ENCODE measurements at regions of chr10 and their contacts with region 1.

Region 1: DNA sequence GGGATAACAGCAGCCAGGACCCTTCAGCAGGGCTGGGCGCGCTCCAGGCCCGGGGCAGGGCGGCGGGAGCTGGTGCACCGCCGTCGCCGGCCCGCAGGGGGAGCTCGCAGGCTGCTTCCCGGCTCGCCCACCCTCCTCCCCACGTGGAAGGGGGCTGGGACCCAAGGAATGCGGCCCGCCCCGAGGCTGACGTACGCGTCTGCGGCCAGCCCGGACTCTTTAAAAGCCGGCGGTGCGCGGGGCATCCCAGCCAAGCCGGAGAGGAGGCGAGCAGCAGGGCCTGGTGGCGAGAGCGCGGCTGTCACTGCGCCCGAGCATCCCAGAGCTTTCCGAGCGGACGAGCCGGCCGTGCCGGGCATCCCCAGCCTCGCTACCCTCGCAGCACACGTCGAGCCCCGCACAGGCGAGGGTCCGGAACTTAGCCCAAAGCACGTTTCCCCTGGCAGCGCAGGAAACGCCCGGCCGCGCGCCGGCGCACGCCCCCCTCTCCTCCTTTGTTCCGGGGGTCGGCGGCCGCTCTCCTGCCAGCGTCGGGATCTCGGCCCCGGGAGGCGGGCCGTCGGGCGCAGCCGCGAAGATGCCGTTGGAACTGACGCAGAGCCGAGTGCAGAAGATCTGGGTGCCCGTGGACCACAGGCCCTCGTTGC is at the start of gene PFKFB3:
- DNase-seq: peak; percentile 79 to 95 (median 91)
- ATAC-seq: peak; percentile 54
- H3K4me3 ChIP-seq: peak within 1 kb of the TSS; percentile 67
- H3K4me3 Mint-ChIP-seq: peak within 1 kb of the TSS; percentile 99
- H3K27ac ChIP-seq: peak within 1 kb of the TSS; percentile 22 to 56
- H3K27ac Mint-ChIP-seq: peak within 1 kb of the TSS; percentile 94
- H3K4me1 ChIP-seq: peaks cover 39% of the 10 kb centered on the region
- H3K4me1 Mint-ChIP-seq: peaks cover 42% of the 10 kb centered on the region
- H3K27me3 ChIP-seq: no peaks in the 10 kb centered on the region
- H3K27me3 Mint-ChIP-seq: no peaks in the 10 kb centered on the region
- CTCF ChIP-seq: peak; percentile 94
- total RNA-seq, gene PFKFB3: 142 to 145 TPM

Region 2: GRCh38 chr10:6144406-6145165 is 58.2 kb before region 1 on chr10:
- CTCF ChIA-PET with region 1: interaction called, 9 read pairs
- POLR2A ChIA-PET with region 1: interaction called, 23 read pairs
- intact Hi-C with region 1: loop called in 1 of 2 experiments (anchors 2 kb)
- DNase-seq: peak; percentile 71 to 94 (median 85)
- ATAC-seq: peak; percentile 90
- H3K4me3 ChIP-seq: peak overlapping the region; percentile 75
- H3K4me3 Mint-ChIP-seq: peak overlapping the region; percentile 89
- H3K27ac ChIP-seq: peak overlapping the region; percentile 70 to 77
- H3K27ac Mint-ChIP-seq: peak overlapping the region; percentile 90
- H3K4me1 ChIP-seq: peaks cover 89% of the 10 kb centered on the region
- H3K4me1 Mint-ChIP-seq: peaks cover 66% of the 10 kb centered on the region
- H3K27me3 ChIP-seq: no peaks in the 10 kb centered on the region
- H3K27me3 Mint-ChIP-seq: no peaks in the 10 kb centered on the region
- CTCF ChIP-seq: no peak

Region 3: DNA sequence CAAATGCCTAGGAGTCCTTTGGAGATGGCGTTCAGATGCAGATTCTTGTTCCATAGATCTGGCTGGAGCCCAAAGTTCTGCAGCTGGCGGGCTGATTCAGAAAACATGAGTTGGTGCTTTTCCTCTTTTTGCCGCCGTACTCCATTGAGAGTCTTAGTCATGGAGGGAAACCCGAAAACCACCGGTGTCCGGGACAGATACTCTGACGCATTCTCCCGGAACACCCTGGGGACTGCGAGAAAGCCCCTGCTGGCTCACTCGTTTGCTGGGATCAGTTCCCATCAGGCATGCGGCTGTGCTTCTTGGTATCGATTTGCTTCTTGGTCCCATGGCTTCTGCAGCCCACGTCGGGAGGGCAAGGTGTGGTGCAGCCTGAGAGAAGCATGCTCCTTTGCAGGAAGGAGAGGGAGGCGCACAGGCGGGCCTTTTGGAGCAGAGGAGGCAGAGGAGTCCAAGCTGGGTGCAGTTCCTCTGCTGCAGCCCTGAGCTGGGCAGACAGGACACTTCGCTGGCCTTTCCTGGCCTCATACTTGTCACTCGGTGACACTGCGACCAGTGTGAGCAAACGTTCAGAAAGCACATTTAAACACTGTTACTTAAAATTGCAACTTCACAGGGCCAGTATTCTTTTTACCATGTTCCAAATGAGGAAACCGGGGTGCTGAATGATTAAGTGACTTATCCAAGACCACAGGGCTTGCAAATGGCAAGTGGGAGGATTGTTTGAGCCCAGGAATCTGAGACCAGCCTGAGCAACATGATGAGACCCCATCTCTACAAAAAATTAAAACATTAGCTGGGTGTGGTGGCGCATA is 30.7 kb before region 1 on chr10:
- CTCF ChIA-PET with region 1: interaction called, 17 read pairs
- POLR2A ChIA-PET with region 1: interaction called, 64 read pairs
- intact Hi-C with region 1: loop called (anchors 1 to 2 kb)
- DNase-seq: peak in 4 of 14 experiments; percentile 15 to 76 (median 57)
- ATAC-seq: no peak
- H3K4me3 ChIP-seq: no peak overlapping the region
- H3K4me3 Mint-ChIP-seq: peak overlapping the region; percentile 18
- H3K27ac ChIP-seq: no peak overlapping the region
- H3K27ac Mint-ChIP-seq: peak overlapping the region; percentile 83
- H3K4me1 ChIP-seq: peaks cover 84% of the 10 kb centered on the region
- H3K4me1 Mint-ChIP-seq: peaks cover 85% of the 10 kb centered on the region
- H3K27me3 ChIP-seq: no peaks in the 10 kb centered on the region
- H3K27me3 Mint-ChIP-seq: no peaks in the 10 kb centered on the region
- CTCF ChIP-seq: no peak

Region 4: GRCh38 chr10:6300106-6300783 is 97.4 kb after region 1 on chr10:
- CTCF ChIA-PET with region 1: interaction called, 19 read pairs
- POLR2A ChIA-PET with region 1: interaction called, 3 read pairs
- intact Hi-C with region 1: loop called in 1 of 2 experiments (anchors 2 kb)
- DNase-seq: peak in 13 of 14 experiments; percentile 7 to 77 (median 36)
- ATAC-seq: peak; percentile 83
- H3K4me3 ChIP-seq: no peak overlapping the region
- H3K4me3 Mint-ChIP-seq: peak overlapping the region; percentile 28
- H3K27ac ChIP-seq: peak overlapping the region; percentile 17 to 27
- H3K27ac Mint-ChIP-seq: peak overlapping the region; percentile 75
- H3K4me1 ChIP-seq: peaks cover 23% of the 10 kb centered on the region
- H3K4me1 Mint-ChIP-seq: peaks cover 33% of the 10 kb centered on the region
- H3K27me3 ChIP-seq: no peaks in the 10 kb centered on the region
- H3K27me3 Mint-ChIP-seq: no peaks in the 10 kb centered on the region
- CTCF ChIP-seq: no peak

Region 5: GRCh38 chr10:6409971-6410651 is 207.3 kb after region 1 on chr10:
- CTCF ChIA-PET with region 1: interaction called, 20 read pairs
- POLR2A ChIA-PET with region 1: interaction called, 29 read pairs
- intact Hi-C with region 1: loop called in 1 of 2 experiments (anchors 1 kb)
- DNase-seq: peak in 13 of 14 experiments; percentile 19 to 86 (median 39)
- ATAC-seq: peak; percentile 95
- H3K4me3 ChIP-seq: peak overlapping the region; percentile 34
- H3K4me3 Mint-ChIP-seq: peak overlapping the region; percentile 78
- H3K27ac ChIP-seq: peak overlapping the region; percentile 51 to 78
- H3K27ac Mint-ChIP-seq: peak overlapping the region; percentile 94
- H3K4me1 ChIP-seq: peaks cover 33% of the 10 kb centered on the region
- H3K4me1 Mint-ChIP-seq: peaks cover 57% of the 10 kb centered on the region
- H3K27me3 ChIP-seq: no peaks in the 10 kb centered on the region
- H3K27me3 Mint-ChIP-seq: no peaks in the 10 kb centered on the region
- CTCF ChIP-seq: no peak

Region 6: DNA sequence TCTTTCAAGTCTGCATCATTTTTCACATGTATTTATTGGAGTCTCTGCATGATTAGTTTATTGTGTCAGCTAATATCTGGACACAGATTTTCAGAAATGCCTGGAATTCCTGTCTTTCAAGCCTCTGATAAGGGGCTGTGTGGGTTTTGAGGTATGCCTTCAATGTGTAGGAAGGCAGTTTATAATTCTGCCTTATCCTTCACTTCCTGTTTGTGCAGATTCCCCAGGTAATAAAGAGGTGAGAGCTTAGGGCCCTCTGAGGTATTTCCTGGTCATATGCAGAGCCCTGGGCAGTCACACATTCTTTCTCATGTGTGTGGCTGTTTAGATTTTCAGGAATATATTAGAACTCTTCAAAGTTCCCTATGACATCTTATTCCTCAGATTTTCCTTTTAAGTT is 456.7 kb after region 1 on chr10:
- CTCF ChIA-PET with region 1: no interaction called
- POLR2A ChIA-PET with region 1: no interaction called
- intact Hi-C with region 1: no loop called
- DNase-seq: no peak
- ATAC-seq: no peak
- H3K4me3 ChIP-seq: no peak overlapping the region
- H3K4me3 Mint-ChIP-seq: no peak overlapping the region
- H3K27ac ChIP-seq: no peak overlapping the region
- H3K27ac Mint-ChIP-seq: no peak overlapping the region
- H3K4me1 ChIP-seq: no peaks in the 10 kb centered on the region
- H3K4me1 Mint-ChIP-seq: peaks cover 20% of the 10 kb centered on the region
- H3K27me3 ChIP-seq: no peaks in the 10 kb centered on the region
- H3K27me3 Mint-ChIP-seq: no peaks in the 10 kb centered on the region
- CTCF ChIP-seq: no peak